ENCODE measurements at regions of chr1 and their contacts with region 1.

Region 1: DNA sequence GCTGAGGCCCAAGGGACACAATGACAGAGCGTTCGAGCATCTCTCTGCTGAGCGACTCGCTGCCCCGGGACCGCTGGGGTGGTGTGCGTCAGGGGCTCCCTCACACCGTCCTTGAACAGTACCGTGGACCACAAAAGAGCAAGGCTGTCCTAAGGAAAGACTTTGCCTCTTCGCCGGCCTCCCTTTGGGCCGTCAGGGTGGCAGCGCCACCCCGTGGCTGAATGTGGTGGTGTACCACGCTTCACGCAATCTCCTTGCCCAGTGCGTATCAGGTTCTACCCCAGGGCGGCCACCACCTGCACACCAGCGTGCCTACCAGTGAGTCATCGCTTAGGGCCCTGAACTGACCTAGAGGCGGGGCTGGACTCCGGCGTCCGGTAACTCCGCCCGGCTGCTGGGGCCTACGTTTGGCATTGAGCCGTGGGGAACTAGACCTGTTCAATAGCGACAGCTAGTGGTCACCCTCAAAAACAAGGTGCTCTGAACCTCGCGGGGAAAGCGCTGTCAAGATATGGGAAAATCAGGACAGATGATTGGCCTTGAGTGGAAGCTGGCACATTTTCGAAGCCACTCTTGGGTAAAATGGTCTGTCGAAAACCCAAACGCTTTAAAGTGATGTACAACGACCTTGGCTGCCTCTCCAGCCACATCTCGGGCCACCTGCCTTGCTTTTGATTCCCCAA is 8.1 kb upstream of the TRAF3IP3 start:
- DNase-seq: peak; percentile 89
- ATAC-seq: peak; percentile 84
- H3K4me3 Mint-ChIP-seq: peak overlapping the region; percentile 66
- H3K27ac Mint-ChIP-seq: peak overlapping the region; percentile 89
- H3K4me1 Mint-ChIP-seq: peaks cover 60% of the 10 kb centered on the region
- H3K27me3 Mint-ChIP-seq: no peaks in the 10 kb centered on the region

Region 2: GRCh38 chr1:209576798-209577197 is 170.9 kb before region 1 on chr1:
- CTCF ChIA-PET with region 1: interaction called, 18 read pairs
- POLR2A ChIA-PET with region 1: no interaction called
- DNase-seq: peak; percentile 71
- ATAC-seq: peak; percentile 92
- H3K4me3 Mint-ChIP-seq: no peak overlapping the region
- H3K27ac Mint-ChIP-seq: no peak overlapping the region
- H3K4me1 Mint-ChIP-seq: no peaks in the 10 kb centered on the region
- H3K27me3 Mint-ChIP-seq: peaks cover 27% of the 10 kb centered on the region

Region 3: DNA sequence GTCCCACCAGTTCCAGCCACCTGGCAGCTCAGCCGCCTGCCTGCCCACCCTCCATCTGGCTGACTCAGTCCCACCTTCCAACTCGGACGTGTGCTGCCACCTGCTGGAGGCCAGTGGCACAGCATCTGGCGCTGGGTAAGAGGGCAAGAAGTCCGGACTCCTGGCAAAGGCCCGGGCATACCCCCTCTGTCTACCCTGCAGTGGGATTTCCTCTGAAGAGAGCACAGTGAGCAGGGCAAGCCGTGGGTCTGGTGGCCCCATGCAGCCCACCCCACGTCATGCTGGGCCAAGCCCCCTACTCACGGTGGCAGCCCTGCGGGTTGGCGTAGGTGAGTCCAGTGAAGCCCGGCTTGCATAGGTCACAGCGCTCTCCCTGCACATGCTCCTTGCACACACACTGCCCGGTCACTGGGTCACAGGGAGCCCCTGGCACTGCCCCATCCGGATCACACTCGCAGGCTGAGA is 120.0 kb before region 1 on chr1:
- CTCF ChIA-PET with region 1: interaction called, 10 read pairs
- POLR2A ChIA-PET with region 1: no interaction called
- DNase-seq: peak; percentile 83
- ATAC-seq: peak; percentile 89
- H3K4me3 Mint-ChIP-seq: no peak overlapping the region
- H3K27ac Mint-ChIP-seq: no peak overlapping the region
- H3K4me1 Mint-ChIP-seq: no peaks in the 10 kb centered on the region
- H3K27me3 Mint-ChIP-seq: no peaks in the 10 kb centered on the region

Region 4: DNA sequence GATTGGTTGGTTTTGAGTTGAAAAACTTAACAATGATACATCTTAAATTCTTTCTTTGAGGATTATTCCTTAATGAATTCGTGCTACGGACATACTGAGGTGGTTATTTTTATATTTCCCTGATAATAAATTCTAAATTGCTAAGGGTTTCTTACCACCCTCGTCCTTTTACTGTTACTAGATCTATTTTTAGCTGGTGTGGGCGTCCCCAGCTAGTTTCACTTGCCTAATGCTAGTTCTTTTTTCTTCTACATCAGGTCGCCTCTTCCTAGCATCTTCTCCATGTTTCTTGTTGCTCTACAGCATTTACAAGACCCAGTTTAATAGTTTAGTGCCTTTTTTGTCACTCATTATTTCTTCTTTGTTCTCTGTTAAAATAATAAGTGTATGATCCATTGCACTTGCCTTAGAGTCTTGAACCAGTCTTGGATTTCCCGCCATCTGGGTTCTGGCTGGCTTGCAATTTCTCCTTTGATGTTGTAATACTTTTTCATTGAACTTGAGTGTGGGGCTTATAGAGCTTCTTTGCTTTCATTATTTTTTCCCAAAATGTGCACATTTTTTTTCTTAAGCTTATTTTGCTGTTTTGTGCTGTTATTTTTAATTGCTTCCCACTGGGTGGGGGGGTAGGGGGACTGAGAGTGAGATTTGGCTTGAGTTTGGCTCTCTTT is 43.8 kb before region 1 on chr1:
- CTCF ChIA-PET with region 1: interaction called, 23 read pairs
- POLR2A ChIA-PET with region 1: no interaction called
- DNase-seq: no peak
- ATAC-seq: no peak
- H3K4me3 Mint-ChIP-seq: no peak overlapping the region
- H3K27ac Mint-ChIP-seq: no peak overlapping the region
- H3K4me1 Mint-ChIP-seq: peaks cover 3% of the 10 kb centered on the region
- H3K27me3 Mint-ChIP-seq: no peaks in the 10 kb centered on the region

Region 5: DNA sequence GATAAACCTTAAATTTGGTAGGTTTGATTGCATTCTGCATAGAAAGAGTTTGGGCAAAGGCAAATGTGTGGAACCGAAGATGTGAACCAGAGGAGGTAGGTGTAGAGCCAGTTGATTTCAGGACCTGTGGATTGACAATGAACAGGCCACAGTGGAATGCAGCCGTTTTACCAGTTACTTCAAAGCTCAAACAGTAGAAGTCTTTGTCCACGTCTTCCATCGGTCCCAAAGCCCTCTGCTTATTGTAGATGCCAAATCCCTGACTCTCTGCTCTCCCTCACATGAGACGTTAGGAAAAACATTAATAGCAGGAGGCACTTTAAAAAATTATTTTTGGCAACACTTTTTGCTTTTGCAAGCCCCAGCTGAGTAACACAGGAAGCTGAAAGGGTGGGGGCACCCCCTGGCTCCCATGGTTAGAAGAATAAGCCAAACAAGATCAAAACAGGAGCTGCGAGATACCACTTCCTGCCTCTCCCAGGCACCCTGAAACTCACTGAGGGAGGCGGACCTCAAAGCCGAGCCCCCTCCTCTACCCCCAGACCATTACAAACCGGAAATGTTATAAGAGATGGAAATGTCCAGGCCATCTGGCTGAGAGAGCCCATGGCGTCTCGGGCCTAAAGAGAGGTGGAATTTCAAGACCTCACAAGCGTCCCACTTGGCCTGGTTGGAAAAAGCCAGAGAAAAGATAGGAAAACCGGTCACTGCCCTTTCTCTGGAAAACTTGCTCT is 21.6 kb after region 1 on chr1:
- CTCF ChIA-PET with region 1: interaction called, 336 read pairs
- POLR2A ChIA-PET with region 1: interaction called, 241 read pairs
- DNase-seq: peak; percentile 89
- ATAC-seq: peak; percentile 58
- H3K4me3 Mint-ChIP-seq: no peak overlapping the region
- H3K27ac Mint-ChIP-seq: no peak overlapping the region
- H3K4me1 Mint-ChIP-seq: peaks cover 36% of the 10 kb centered on the region
- H3K27me3 Mint-ChIP-seq: no peaks in the 10 kb centered on the region

Region 6: GRCh38 chr1:209827384-209828262 is 79.9 kb after region 1 on chr1 and contains the start of gene UTP25:
- CTCF ChIA-PET with region 1: interaction called, 17 read pairs
- POLR2A ChIA-PET with region 1: no interaction called
- DNase-seq: peak; percentile 96
- ATAC-seq: peak; percentile 94
- H3K4me3 Mint-ChIP-seq: peak within 1 kb of the TSS; percentile 95
- H3K27ac Mint-ChIP-seq: peak within 1 kb of the TSS; percentile 86
- H3K4me1 Mint-ChIP-seq: peaks cover 33% of the 10 kb centered on the region
- H3K27me3 Mint-ChIP-seq: peaks cover 6% of the 10 kb centered on the region
- total RNA-seq, gene UTP25: 6.3 to 6.5 TPM

Measured in activated CD8-positive, alpha-beta T cell treated with anti-CD3 and anti-CD28 coated beads, Interleukin-2, amount 10 ng/mL, durations not matched to agents 7 days and 5 days (primary cell).